ENCODE measurements at regions of chr11 and their contacts with region 1.

Region 1: GRCh38 chr11:102794447-102794781 is 3.5 kb downstream of the MMP1 start:
- DNase-seq: peak; percentile 59
- ATAC-seq: peak; percentile 99
- H3K4me3 ChIP-seq: no peak overlapping the region
- H3K27ac ChIP-seq: no peak overlapping the region
- H3K4me1 ChIP-seq: no peaks in the 10 kb centered on the region
- H3K27me3 ChIP-seq: no peaks in the 10 kb centered on the region
- CTCF ChIP-seq: peak; percentile 68 to 85 (median 77)
- POLR2A ChIP-seq: no peak
- RAD21 ChIP-seq: peak; percentile 60

Region 2: GRCh38 chr11:102709201-102709945 is 85.0 kb before region 1 on chr11:
- CTCF ChIA-PET with region 1: no interaction called
- POLR2A ChIA-PET with region 1: no interaction called
- RAD21 ChIA-PET with region 1: no interaction called
- intact Hi-C with region 1: no loop called
- DNase-seq: no peak
- ATAC-seq: no peak
- H3K4me3 ChIP-seq: no peak overlapping the region
- H3K27ac ChIP-seq: no peak overlapping the region
- H3K4me1 ChIP-seq: no peaks in the 10 kb centered on the region
- H3K27me3 ChIP-seq: no peaks in the 10 kb centered on the region
- CTCF ChIP-seq: no peak
- POLR2A ChIP-seq: no peak
- RAD21 ChIP-seq: no peak

Region 3: GRCh38 chr11:102780491-102780918 is 13.9 kb before region 1 on chr11 and contains the start of gene MMP10:
- CTCF ChIA-PET with region 1: interaction called, 13 read pairs
- POLR2A ChIA-PET with region 1: no interaction called
- RAD21 ChIA-PET with region 1: no interaction called
- intact Hi-C with region 1: no loop called
- DNase-seq: peak; percentile 54
- ATAC-seq: peak; percentile 99
- H3K4me3 ChIP-seq: no peak within 1 kb of the TSS
- H3K27ac ChIP-seq: no peak within 1 kb of the TSS
- H3K4me1 ChIP-seq: peaks cover 0 to 6% of the 10 kb centered on the region in 2 experiments; a peak in 1 of 4 replicates
- H3K27me3 ChIP-seq: no peaks in the 10 kb centered on the region
- CTCF ChIP-seq: peak; percentile 42 to 72 (median 72); a peak in 5 of 6 replicates
- POLR2A ChIP-seq: no peak
- RAD21 ChIP-seq: peak; percentile 44; the same call in 1 of the 2 replicates
- total RNA-seq, gene MMP10: not detected

Region 4: DNA sequence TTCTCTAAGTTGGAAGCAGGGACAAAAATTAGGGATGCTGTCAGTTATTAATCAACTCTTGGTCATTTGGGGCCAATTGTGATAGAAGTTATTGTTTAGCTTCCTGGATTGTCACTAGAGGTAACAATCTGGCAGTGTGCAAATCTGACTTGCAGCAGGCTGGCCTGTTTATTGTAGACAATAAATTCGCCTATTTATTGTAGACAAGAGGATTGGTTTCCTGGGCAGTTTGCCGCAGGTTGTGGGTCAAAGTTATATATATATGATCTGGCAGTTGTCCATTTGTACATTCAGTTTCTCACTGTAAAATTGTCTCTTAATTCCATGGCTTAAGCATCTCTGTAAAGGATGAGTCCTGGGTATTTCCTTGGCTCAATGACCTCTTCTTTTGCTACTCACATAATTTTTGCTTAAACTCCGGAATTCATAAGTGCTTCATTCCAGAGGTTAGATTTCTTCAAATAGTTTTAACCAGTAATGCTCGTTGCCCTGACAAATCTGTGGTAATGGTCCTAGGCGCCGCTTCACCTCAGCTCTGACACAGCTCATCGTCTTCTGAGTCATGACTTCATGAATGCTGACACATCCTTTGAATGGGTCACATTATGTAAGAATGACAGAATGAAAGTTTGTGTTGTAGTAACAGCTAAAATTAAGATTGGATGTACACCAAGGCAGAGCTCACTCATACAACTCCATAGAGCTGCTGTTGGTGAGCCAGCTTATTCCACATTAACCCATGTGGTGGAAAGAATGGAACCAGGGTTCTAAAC is 56.7 kb after region 1 on chr11:
- CTCF ChIA-PET with region 1: no interaction called
- POLR2A ChIA-PET with region 1: no interaction called
- RAD21 ChIA-PET with region 1: no interaction called
- intact Hi-C with region 1: no loop called
- DNase-seq: no peak
- ATAC-seq: no peak
- H3K4me3 ChIP-seq: no peak overlapping the region
- H3K27ac ChIP-seq: no peak overlapping the region
- H3K4me1 ChIP-seq: no peaks in the 10 kb centered on the region
- H3K27me3 ChIP-seq: no peaks in the 10 kb centered on the region
- CTCF ChIP-seq: no peak
- POLR2A ChIP-seq: no peak
- RAD21 ChIP-seq: no peak

Measured in HCT116 (cell line).